ENCODE measurements at regions of chr10 and their contacts with region 1.

Region 1: GRCh38 chr10:24851629-24852028 is 100.8 kb downstream of the PRTFDC1 start:
- DNase-seq: no peak

Region 2: DNA sequence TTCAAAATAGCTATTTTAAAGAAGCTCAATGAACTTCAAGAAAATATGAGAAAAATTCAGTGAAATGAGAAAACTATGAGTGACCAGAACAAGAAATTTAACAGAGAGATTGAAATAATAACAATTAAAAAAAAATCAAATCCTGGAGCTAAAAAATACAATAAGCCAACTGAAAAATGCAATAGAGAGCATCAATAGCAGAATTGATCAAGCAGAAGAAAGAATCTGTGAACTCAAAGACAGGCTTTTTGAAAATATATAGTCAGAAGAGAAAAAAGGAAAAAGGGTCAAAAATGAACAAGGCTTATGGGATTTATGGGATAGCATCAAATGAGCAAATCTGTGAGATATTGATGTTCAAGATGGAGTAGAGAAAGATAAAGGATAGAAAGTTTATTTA is 1279.7 kb before region 1 on chr10:
- intact Hi-C with region 1: loop called in 1 of 2 experiments (anchors 10 kb)
- DNase-seq: no peak